Left colon (tissue), 2 donors: ENCODE measurements at regions of chr15 and their contacts with region 1.

Region 1: GRCh38 chr15:37793851-37794250 is 140.6 kb upstream of the TMCO5A start:
- DNase-seq: no peak
- ATAC-seq: no peak

Region 2: DNA sequence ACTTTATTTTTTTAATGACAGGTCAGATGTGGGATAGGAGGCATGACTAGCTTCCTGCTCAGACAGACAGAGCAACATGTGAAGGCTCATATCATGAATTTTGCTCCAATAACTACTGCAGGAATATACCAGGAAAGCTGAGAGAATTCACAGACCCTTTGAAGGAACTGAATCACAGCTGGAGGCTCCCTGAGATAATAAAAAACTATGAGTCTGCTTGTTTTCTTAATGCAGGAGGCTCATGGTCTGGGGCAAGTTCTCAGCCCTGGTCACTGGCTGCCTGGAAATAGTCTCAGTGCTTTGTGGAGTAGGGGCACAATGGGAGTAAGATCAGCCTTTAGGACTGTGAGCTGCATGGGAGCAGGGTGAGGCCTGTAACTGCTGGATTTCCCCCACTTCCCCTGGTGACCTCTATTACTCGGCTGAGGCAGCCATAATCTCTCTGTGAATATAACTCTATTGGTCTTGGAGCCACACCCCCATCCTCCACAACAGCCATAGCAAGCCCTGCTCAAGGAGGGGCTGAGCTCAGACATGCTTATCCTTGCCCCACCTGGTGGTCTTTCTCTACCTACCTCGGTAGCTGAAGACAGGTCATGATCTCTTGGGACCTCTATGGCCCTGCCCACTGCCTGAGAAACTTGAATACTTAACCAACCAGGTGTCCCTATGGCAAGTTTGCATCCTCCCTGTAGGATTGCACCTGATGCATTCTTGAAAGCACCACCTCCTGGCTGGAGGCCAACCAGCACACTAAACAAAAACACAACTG is 141.0 kb before region 1 on chr15:
- intact Hi-C with region 1: no loop called
- DNase-seq: no peak
- ATAC-seq: no peak

Region 3: DNA sequence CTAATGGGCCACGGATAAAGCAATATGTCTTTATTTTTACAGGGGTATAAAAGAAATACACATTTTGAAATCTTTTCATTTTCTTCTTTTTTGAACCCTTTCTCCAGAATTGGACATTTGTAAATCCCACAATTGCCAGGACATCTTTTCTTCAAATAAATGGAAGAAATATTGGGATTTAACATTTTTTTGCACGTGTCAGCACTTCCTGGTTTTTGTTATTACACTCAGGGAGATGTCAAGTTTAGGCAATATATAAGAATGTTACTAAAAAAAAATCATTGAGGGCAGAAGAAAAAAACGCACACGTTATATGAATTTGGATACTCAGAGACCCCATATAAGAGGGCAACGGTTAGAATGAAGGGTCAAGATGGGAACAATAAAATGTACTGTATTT is 62.3 kb after region 1 on chr15:
- intact Hi-C with region 1: loop called in 1 of 2 experiments (anchors 10 kb)
- DNase-seq: no peak
- ATAC-seq: no peak

Region 4: DNA sequence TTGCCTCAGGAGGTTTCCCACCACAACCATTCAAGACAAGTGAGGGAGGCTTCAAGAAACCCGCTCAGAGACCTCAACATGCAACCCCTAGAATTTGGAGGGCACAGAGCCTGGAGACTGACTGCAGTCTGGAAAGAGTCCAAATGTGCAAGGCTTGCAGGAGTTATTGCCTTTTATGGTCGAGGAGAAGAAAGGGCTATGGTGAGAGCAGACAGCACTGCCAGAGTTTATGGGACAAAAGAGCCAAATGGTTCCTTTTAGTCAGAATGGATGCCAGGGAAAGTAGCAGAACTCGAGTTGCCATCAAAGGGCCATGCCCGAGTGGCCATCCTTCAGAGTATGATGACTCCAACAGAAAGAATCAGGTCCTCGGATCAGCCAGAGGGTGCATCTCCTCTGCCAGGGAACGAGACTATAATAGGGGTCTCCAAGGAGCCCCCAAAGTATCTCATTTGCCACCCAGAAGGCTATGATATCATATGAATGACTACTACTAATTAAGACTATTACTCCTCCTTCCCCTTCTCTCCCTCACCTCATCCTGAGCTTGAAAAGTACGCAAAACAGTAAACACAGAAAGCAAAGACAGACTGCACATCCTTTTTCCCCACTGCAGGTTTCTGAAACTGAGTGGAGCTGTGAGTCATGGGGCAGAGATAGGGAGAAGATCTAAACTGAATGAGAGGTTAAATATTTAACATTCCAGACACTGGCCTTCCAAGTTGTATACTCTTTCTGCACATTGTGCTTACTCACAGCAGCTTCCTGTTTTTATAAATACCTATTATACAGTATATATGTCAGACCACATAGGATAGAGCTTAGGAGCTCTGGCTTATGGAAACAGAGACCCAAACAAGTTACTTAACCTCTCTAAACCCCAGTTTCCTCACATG is 106.7 kb after region 1 on chr15:
- intact Hi-C with region 1: no loop called
- DNase-seq: no peak
- ATAC-seq: peak; percentile 77

Region 5: DNA sequence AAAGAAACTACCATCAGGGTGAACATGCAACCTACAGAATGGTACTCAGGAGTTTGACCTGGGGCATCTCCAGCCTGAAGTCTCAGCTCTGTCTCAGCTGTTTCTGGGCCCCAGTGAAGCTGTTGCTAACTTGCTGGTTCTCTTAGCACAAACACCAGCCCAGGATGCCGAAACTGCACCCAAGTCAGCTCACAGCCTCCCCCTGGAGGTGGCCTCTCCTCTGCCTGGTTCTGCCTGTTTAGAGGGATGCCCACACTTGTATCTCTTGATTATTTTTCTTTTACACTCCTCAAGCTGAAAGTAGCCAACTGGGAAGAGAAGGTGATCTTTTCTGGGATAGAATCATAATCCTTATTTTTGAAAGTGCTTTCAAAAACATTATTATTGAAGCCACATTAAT is 1059.8 kb after region 1 on chr15:
- intact Hi-C with region 1: no loop called
- DNase-seq: no peak
- ATAC-seq: no peak